ENCODE measurements at regions of chr20 and their contacts with region 1.

Region 1: GRCh38 chr20:48635433-48636310 is 192.1 kb downstream of the PREX1 start:
- DNase-seq: peak; percentile 74
- H3K4me3 Mint-ChIP-seq: no peak overlapping the region
- H3K27ac Mint-ChIP-seq: peak overlapping the region; percentile 63
- H3K4me1 Mint-ChIP-seq: peaks cover 50% of the 10 kb centered on the region
- H3K27me3 Mint-ChIP-seq: no peaks in the 10 kb centered on the region

Region 2: GRCh38 chr20:48350313-48351008 is 285.2 kb before region 1 on chr20:
- CTCF ChIA-PET with region 1: no interaction called
- POLR2A ChIA-PET with region 1: no interaction called
- DNase-seq: no peak
- H3K4me3 Mint-ChIP-seq: no peak overlapping the region
- H3K27ac Mint-ChIP-seq: no peak overlapping the region
- H3K4me1 Mint-ChIP-seq: no peaks in the 10 kb centered on the region
- H3K27me3 Mint-ChIP-seq: peaks cover 9% of the 10 kb centered on the region

Region 3: DNA sequence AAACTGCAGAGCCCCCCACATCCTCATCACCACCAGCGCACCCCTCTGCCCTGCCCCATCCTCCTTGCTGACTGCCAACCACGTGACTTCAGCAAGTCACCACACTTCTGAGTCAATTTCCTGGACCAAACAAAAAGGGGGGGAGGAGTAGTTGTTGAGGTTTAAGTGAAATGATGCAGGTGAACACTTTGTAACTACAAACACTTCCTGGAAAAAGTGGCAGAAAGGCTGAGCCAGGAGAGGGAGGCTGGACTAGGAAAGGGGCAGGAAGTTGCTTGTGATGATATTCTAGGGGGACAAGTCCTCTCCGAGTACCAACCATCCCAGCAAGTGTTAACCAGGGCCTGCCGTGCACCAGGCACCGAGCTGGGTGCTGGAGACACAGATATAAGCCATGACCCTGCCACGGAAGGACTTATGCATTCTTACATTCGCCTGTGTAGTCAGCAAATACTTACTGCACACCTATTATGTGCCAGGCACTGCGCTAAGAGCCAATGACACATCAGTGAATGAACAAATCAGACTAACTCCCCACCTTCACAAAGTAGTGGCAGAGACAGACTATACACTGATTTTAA is 124.8 kb after region 1 on chr20:
- CTCF ChIA-PET with region 1: no interaction called
- POLR2A ChIA-PET with region 1: no interaction called
- DNase-seq: peak; percentile 81
- H3K4me3 Mint-ChIP-seq: peak overlapping the region; percentile 57
- H3K27ac Mint-ChIP-seq: peak overlapping the region; percentile 100
- H3K4me1 Mint-ChIP-seq: peaks cover 93% of the 10 kb centered on the region
- H3K27me3 Mint-ChIP-seq: no peaks in the 10 kb centered on the region

Region 4: DNA sequence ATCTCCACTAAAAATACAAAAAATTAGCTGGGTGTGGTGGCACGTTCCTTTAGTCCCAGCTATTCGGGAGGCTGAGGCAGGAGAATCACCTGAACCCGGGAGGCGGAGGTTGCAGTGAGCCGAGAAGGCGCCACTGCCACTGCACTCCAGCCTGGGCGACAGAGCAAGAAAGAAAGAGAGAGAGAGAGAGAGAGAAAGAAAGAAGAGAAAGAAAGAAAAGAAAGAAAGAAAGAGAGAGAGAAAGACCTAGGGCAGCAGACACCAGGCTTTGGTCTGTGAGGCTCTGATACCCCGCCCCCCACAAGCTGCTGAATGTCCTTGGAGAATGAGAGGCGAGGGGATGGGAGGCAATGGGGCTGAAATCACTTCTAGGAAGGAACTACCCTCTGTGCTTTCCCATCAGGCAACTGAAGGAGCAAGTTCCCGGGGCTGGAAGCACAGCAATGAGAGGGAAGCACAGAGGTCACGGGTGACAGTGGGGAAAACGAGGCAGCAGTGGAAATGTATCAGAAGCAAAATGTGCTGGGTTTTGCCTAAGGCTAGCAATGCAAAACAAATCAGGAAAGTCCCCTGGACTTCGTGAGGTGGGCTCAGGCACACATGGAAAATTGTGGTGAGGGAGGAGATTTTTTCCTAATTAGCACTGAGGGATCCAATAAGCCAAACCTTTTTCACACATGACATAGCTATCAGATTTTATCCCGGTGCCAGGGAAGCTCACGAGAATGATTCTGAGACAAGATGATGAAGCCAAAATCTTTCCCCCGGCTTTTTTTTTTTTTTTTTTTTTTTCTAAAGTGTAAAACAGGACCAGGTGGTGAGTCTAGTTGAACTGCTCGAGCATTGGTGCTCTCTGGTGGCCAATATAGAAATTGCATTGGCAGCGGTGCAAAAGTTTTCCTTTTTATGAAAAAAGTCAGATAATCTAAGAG is 269.0 kb after region 1 on chr20:
- CTCF ChIA-PET with region 1: interaction called, 20 read pairs
- POLR2A ChIA-PET with region 1: no interaction called
- DNase-seq: peak; percentile 75
- H3K4me3 Mint-ChIP-seq: no peak overlapping the region
- H3K27ac Mint-ChIP-seq: no peak overlapping the region
- H3K4me1 Mint-ChIP-seq: peaks cover 27% of the 10 kb centered on the region
- H3K27me3 Mint-ChIP-seq: peaks cover 4% of the 10 kb centered on the region